H1 (cell line): ENCODE measurements at regions of chr3 and their contacts with region 1.

Region 1: DNA sequence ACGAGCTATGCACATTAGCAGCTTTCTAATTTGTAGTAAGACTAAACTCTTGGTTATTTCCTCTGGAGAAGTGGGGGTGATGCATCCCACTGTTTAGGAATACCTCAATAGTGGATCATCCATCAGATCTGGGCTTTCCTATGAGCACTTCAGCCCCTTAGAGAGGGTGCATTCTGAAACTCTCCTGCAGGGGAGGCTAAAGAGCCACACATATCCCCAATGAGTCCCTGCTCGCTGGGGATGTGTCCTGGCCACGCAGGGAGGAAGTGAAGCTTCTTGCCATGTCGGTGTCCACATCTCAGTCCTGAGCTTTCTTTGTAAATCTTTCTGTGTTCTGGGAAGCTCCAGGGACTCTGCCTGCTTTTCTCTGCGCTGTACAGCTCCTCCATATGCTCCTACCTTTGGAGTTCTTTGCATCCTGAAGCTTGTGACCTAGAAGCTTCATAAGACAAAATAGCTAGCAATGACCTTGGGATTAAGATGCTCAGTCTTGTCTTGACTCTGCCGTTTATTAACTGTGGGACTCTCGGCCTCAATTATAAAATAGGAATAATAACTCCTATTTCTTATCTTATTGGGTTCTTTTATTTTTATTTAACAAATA is 28.3 kb upstream of the MASP1 start:
- DNase-seq: peak; percentile 72 to 94
- H3K4me3 ChIP-seq: no peak overlapping the region
- H3K27ac ChIP-seq: no peak overlapping the region
- H3K4me1 ChIP-seq: peaks cover 0 to 4% (median 2%) of the 10 kb centered on the region in 4 experiments; a peak in 4 of 7 replicates
- H3K27me3 ChIP-seq: no peaks in the 10 kb centered on the region; a peak in 1 of 7 replicates
- CTCF ChIP-seq: peak; percentile 76 to 97 (median 95)
- EP300 ChIP-seq: no peak
- POLR2A ChIP-seq: no peak
- RAD21 ChIP-seq: peak; percentile 99 to 100

Region 2: GRCh38 chr3:187164885-187165543 is 154.8 kb before region 1 on chr3:
- CTCF ChIA-PET with region 1: interaction called, 16 read pairs
- POLR2A ChIA-PET with region 1: no interaction called
- DNase-seq: peak in 1 of 2 experiments; percentile 56
- H3K4me3 ChIP-seq: peak overlapping the region in 1 of 4 experiments; percentile 6; a peak in 1 of 8 replicates
- H3K27ac ChIP-seq: no peak overlapping the region
- H3K4me1 ChIP-seq: peaks cover 3 to 13% (median 7%) of the 10 kb centered on the region in 4 experiments; a peak in 6 of 7 replicates
- H3K27me3 ChIP-seq: no peaks in the 10 kb centered on the region
- CTCF ChIP-seq: peak in 2 of 3 experiments; percentile 46 to 64; a peak in 2 of 4 replicates
- EP300 ChIP-seq: no peak
- POLR2A ChIP-seq: no peak
- RAD21 ChIP-seq: peak; percentile 46 to 49

Region 3: GRCh38 chr3:187274977-187275338 is 44.8 kb before region 1 on chr3:
- CTCF ChIA-PET with region 1: interaction called, 26 read pairs
- POLR2A ChIA-PET with region 1: no interaction called
- DNase-seq: peak; percentile 59 to 61
- H3K4me3 ChIP-seq: peak overlapping the region in 2 of 4 experiments; percentile 24 to 31; a peak in 4 of 8 replicates
- H3K27ac ChIP-seq: peak overlapping the region; percentile 51; the same call in 1 of the 2 replicates
- H3K4me1 ChIP-seq: peaks cover 7 to 20% (median 15%) of the 10 kb centered on the region in 4 experiments
- H3K27me3 ChIP-seq: no peaks in the 10 kb centered on the region
- CTCF ChIP-seq: no peak
- EP300 ChIP-seq: no peak
- POLR2A ChIP-seq: peak in 1 of 2 experiments; percentile 38; a peak in 1 of 3 replicates
- RAD21 ChIP-seq: no peak

Region 4: GRCh38 chr3:187361835-187362234 is 42.0 kb after region 1 on chr3:
- CTCF ChIA-PET with region 1: interaction called, 75 read pairs
- POLR2A ChIA-PET with region 1: no interaction called
- DNase-seq: no peak
- H3K4me3 ChIP-seq: no peak overlapping the region; a peak in 1 of 8 replicates
- H3K27ac ChIP-seq: no peak overlapping the region
- H3K4me1 ChIP-seq: peaks cover 0 to 29% (median 20%) of the 10 kb centered on the region in 4 experiments; a peak in 5 of 7 replicates
- H3K27me3 ChIP-seq: no peaks in the 10 kb centered on the region; a peak in 1 of 7 replicates
- CTCF ChIP-seq: no peak
- EP300 ChIP-seq: no peak
- POLR2A ChIP-seq: no peak
- RAD21 ChIP-seq: no peak

Region 5: DNA sequence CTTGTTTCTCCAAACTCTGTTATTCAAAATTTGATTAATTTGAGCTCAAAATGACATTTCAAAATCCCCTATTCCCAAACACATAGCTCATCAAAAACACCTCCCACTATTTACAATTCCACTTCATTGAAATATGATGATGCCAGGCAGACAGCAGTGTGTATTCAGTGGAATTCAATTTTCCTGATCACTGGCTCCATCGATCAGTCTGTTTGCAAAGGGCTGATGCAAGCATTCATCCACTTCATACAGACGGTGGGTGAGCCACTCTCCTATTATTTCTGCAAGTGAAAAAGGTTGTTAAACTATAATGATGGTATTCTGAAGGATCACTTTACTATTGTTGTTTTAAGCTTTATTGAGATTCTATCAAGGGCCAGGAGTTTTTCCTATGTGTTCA is 139.1 kb after region 1 on chr3:
- CTCF ChIA-PET with region 1: interaction called, 19 read pairs
- POLR2A ChIA-PET with region 1: no interaction called
- DNase-seq: no peak
- H3K4me3 ChIP-seq: no peak overlapping the region
- H3K27ac ChIP-seq: no peak overlapping the region
- H3K4me1 ChIP-seq: peaks cover 0 to 2% (median 0%) of the 10 kb centered on the region in 4 experiments; a peak in 1 of 7 replicates
- H3K27me3 ChIP-seq: no peaks in the 10 kb centered on the region
- CTCF ChIP-seq: no peak
- EP300 ChIP-seq: no peak
- POLR2A ChIP-seq: no peak
- RAD21 ChIP-seq: no peak

Region 6: DNA sequence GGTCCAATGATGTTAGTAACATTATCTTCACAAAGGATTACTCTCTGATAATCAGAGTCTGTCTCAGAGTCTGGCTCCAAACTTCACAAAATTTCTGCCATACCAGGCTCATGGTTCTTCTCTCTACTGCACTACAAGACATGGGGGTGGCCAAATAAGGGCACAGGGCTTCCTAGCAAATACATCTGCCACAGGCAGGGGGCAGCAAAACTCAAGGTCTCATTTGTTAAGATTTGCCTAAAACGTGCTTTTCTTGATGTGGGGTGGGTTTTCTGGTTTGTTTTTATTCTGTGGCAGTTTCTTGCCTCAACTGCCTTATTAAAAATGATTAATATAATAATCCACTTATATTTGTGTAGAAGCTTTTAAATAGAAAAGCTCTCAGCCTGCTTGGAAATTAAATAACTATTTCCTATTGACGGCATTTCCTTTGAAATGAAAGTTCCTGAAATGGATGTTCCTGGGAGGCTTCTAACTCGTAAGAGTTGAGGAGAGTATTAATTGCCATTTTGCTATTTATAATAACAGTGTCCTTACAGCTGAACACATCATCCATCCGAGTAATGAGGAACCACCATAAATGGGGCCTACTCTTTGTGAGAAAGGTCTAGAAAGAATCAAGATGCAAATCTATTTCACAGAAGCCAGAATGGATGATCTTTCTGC is 296.6 kb after region 1 on chr3:
- CTCF ChIA-PET with region 1: interaction called, 168 read pairs
- POLR2A ChIA-PET with region 1: no interaction called
- DNase-seq: peak; percentile 38 to 76
- H3K4me3 ChIP-seq: no peak overlapping the region
- H3K27ac ChIP-seq: no peak overlapping the region
- H3K4me1 ChIP-seq: peaks cover 2 to 10% (median 7%) of the 10 kb centered on the region in 4 experiments; a peak in 5 of 7 replicates
- H3K27me3 ChIP-seq: peaks cover 22 to 33% (median 27%) of the 10 kb centered on the region in 4 experiments; a peak in 5 of 7 replicates
- CTCF ChIP-seq: peak; percentile 52 to 77 (median 72)
- EP300 ChIP-seq: no peak
- POLR2A ChIP-seq: no peak
- RAD21 ChIP-seq: peak; percentile 77 to 83

Region 7: DNA sequence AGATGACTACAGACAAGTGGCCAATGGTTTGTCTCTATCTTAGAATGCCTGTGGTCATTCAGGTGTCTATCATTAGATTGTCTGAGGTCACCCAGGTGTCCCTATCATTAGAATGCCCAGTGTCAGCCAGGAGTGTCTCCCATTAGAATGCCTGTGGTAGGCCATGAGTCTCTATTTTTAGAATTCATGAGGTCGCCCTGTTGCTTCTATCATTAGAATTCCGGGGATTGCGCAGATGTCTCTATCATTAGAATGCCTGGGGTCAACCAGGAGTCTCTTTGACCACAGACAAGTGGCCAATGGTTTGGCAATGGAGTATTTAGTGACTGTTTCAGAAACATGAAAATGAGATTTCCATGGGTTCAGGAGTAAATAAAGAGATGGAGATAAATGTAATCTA is 375.0 kb after region 1 on chr3:
- CTCF ChIA-PET with region 1: interaction called, 44 read pairs
- POLR2A ChIA-PET with region 1: no interaction called
- DNase-seq: no peak
- H3K4me3 ChIP-seq: no peak overlapping the region
- H3K27ac ChIP-seq: no peak overlapping the region
- H3K4me1 ChIP-seq: no peaks in the 10 kb centered on the region
- H3K27me3 ChIP-seq: no peaks in the 10 kb centered on the region
- CTCF ChIP-seq: no peak
- EP300 ChIP-seq: no peak
- POLR2A ChIP-seq: no peak
- RAD21 ChIP-seq: no peak